Endothelial cell of umbilical vein (primary cell): ENCODE measurements at regions of chr4 and their contacts with region 1.

Region 1: DNA sequence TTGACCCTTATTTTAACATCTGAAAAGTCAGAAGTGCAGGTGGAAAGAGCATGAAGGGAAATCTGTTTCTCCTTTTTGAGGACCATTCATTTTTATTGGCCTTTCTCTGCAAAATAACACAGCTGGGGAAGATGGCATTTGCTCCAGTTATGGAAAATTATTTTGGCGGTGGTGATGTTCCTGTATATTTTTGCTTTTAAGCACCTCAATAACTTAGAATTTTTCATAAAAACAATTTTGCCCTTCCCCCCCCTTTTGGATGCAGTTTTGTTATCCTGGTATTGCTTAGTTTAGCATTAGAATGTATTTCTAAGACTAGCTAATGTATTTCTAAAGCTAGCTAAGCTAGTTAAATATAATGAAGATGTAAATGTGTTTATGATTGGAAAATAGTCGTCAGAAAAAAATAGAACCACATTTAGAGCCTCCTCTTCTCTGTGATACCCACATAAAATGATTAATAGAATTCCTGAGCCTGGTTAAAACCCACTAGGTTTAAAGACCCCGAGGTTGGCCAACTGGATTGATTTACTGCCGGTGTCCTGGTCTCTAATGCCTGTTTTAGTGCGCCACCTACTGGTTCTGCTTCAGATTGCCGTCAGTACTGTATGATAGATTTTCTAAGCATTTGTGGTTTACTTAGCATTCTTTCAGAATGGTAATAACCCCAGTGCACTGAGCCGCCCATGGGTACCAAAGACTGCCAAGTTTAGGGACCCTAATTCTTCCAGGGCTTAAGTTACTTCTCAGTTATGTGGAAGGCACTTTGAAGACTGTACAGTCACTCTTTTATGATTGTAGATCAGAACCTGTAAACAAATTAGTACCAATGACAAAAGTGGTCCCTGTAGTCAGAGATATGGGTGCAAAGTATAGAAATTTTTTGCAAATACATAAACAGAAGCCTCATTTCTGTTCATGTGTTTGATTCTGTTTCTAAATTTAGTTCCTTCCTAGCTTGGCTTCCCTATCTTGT is 11.4 kb downstream of the KLF3 start:
- DNase-seq: peak; percentile 86
- H3K4me3 ChIP-seq: no peak overlapping the region
- H3K27ac ChIP-seq: no peak overlapping the region
- H3K4me1 ChIP-seq: peaks cover 64% of the 10 kb centered on the region
- H3K27me3 ChIP-seq: no peaks in the 10 kb centered on the region
- CTCF ChIP-seq: peak; percentile 75 to 88
- POLR2A ChIP-seq: no peak

Region 2: DNA sequence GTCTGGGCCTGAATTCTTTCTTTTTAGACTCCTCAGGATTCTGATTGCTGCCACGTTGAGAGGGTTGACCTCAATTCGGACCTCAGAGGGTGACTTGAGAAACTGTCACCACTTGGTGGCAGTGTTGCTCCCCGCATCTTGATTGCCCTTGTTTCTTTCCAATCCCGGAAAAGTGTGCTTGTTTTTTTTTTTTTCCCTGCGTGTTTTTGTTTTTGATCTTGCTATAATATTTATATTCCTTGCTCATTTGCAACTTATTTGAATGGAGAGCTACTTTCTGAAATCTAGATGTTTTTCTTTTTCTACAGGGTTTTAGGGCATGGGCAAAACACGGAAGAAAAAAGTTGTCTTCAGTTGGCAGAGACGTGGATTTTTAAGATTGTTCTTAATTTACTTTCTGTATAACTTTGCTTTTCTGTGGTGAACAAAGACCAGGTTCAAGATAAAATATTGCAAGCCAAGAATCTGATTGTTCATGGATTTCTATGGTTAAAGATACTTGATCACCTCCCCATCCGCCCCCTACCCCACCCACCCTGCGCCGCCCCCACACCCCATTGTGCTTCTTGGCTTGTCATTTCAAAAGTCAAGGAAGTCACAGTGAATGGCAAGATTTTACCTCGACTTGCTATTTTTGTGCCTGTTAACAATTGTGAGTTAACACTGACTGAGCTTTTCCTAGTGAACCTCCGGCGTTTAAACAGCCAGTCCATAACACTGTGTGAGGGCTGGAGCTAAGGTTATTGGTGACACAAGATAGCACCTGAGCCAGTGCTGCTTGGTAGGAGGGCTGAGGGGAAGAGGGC is 613.1 kb before region 1 on chr4:
- CTCF ChIA-PET with region 1: interaction called, 6 read pairs
- POLR2A ChIA-PET with region 1: no interaction called
- dilution Hi-C with region 1: no loop called
- intact Hi-C with region 1: loop called (anchors 1 kb)
- DNase-seq: peak; percentile 82
- H3K4me3 ChIP-seq: peak overlapping the region in 2 of 3 experiments; percentile 8 to 64
- H3K27ac ChIP-seq: no peak overlapping the region
- H3K4me1 ChIP-seq: peaks cover 2% of the 10 kb centered on the region
- H3K27me3 ChIP-seq: no peaks in the 10 kb centered on the region
- CTCF ChIP-seq: peak; percentile 77 to 78
- POLR2A ChIP-seq: no peak

Region 3: DNA sequence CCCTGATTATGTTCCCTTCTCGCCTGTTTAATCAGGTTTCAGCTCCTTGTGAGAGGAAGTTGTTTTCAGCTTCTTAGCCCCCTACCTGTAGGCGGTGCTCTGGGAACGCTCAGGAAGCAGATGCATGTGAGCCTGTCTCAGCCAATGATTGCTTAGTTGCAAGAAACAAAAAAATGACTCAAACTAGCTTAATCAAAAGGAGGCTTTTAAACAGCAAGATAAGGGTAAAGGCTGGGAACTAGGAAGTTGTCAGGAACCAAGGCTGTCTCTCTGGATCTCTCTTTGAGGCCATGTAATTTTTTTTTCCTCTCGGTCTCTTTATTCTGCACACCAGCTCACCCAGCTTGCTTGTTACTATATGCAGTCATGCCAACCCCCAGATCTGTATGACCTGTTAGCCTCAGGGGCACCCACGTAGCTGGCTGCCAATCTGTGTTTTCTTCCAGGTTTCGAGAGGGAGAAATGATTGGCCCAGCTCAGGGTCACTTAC is 606.1 kb before region 1 on chr4:
- CTCF ChIA-PET with region 1: interaction called, 13 read pairs
- POLR2A ChIA-PET with region 1: no interaction called
- dilution Hi-C with region 1: no loop called
- intact Hi-C with region 1: no loop called
- DNase-seq: peak; percentile 38
- H3K4me3 ChIP-seq: no peak overlapping the region
- H3K27ac ChIP-seq: no peak overlapping the region
- H3K4me1 ChIP-seq: peaks cover 10% of the 10 kb centered on the region
- H3K27me3 ChIP-seq: no peaks in the 10 kb centered on the region
- CTCF ChIP-seq: no peak
- POLR2A ChIP-seq: no peak

Region 4: GRCh38 chr4:38174801-38175200 is 500.6 kb before region 1 on chr4:
- CTCF ChIA-PET with region 1: interaction called, 133 read pairs
- POLR2A ChIA-PET with region 1: no interaction called
- dilution Hi-C with region 1: loop called (anchors 25 kb)
- intact Hi-C with region 1: loop called (anchors 1 kb)
- DNase-seq: peak; percentile 16
- H3K4me3 ChIP-seq: no peak overlapping the region
- H3K27ac ChIP-seq: no peak overlapping the region
- H3K4me1 ChIP-seq: peaks cover 18% of the 10 kb centered on the region
- H3K27me3 ChIP-seq: peaks cover 2 to 7% of the 10 kb centered on the region in 2 experiments
- CTCF ChIP-seq: no peak
- POLR2A ChIP-seq: no peak

Region 5: DNA sequence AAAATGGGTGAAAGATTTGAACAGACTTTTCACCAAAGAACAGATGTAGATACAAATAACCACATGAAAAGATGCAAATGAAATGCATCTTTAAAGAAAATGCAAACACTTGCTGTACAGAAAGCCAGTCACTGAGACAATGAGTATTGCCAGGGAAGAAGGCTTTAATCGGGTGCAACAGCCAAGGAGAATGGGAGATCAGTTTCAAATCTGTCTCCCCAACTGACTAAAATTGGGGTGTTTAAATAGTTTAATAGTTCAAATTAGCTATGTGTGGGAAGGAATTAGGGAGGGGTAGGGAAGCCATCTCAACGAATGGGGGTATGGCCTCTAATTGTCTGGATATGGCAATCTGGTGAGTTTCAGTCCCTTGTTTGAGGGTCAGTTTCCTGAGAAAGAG is 419.9 kb before region 1 on chr4:
- CTCF ChIA-PET with region 1: no interaction called
- POLR2A ChIA-PET with region 1: no interaction called
- dilution Hi-C with region 1: no loop called
- intact Hi-C with region 1: no loop called
- DNase-seq: no peak
- H3K4me3 ChIP-seq: no peak overlapping the region
- H3K27ac ChIP-seq: no peak overlapping the region
- H3K4me1 ChIP-seq: no peaks in the 10 kb centered on the region
- H3K27me3 ChIP-seq: peaks cover 3% of the 10 kb centered on the region in 2 experiments
- CTCF ChIP-seq: no peak
- POLR2A ChIP-seq: no peak

Region 6: DNA sequence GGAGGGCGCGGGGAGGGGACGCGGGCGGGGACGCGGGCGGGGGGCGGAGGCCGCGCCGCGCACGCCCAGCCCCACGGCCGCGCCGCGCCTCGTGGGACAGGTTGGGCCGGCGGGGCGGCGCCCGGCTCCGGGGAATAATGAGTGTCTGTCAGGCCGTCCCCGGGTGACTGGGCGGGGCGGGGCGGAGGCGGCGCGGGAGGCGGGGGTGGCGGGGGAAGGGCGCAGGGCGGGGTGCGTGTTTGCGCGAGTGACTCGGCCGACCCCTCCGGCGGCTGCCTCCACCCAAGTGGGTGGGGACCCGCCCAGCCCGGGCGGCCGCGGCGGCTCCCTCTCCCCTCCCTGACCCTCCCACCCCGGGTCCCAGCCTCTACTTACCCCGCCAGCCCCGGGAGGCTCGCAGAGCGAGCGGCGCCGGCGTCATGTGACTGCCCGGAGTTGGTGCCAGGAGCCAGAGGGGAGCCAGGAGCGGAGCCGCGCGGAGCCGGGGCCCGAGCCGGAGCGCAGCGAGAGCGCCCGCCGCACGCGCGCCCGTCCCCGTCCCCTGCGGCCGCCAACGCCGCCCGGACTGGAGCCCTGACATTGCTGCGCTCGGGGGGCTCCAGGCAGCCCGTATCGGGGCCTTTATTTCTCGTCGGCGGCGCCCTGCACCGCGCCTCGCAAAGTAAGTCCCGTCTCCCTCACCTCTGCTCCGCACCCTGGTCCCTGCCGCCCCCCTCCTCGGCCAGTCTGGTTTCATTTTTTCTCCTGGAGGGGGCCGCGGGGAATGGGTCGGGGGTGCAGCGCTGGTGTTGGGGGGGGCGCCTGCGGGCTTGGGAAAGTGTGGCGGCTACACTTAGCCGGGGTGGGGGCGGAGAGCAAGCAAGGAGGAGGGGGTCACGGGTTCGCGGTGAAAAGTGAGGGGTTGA is 11.4 kb before region 1 on chr4 and contains the start of gene KLF3:
- CTCF ChIA-PET with region 1: interaction called, 16 read pairs
- POLR2A ChIA-PET with region 1: interaction called, 6 read pairs
- dilution Hi-C with region 1: no loop called
- intact Hi-C with region 1: loop called (anchors 1 kb)
- DNase-seq: peak; percentile 86
- H3K4me3 ChIP-seq: peak within 1 kb of the TSS; percentile 81 to 89 (median 88)
- H3K27ac ChIP-seq: peak within 1 kb of the TSS; percentile 99
- H3K4me1 ChIP-seq: peaks cover 28% of the 10 kb centered on the region
- H3K27me3 ChIP-seq: no peaks in the 10 kb centered on the region
- CTCF ChIP-seq: no peak
- POLR2A ChIP-seq: peak; percentile 56
- total RNA-seq, gene KLF3: 50.5 and 51.8 TPM in 2 replicates

Region 7: DNA sequence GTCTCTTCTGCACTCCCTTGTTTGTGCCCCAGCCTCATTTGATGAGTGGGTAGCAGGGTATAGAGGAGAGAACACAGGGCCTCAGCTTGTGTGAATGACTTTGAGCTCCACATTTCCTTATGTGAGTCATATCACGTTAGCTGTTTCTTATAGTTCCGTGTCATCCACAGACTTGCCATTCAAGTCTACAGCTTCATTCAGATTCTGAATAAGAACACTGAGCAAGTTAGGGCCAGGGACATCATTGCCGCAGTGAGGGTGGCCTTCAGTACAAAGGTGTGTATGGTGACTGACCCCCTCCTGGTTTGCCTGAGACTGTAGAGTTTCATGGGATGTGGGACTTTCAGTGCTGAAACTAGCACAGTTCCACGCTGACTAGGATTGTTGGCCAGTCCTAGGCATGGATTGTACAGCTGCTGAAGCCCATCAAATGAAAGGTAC is 12.2 kb after region 1 on chr4:
- CTCF ChIA-PET with region 1: interaction called, 40 read pairs
- POLR2A ChIA-PET with region 1: no interaction called
- dilution Hi-C with region 1: no loop called
- intact Hi-C with region 1: no loop called
- DNase-seq: peak; percentile 56
- H3K4me3 ChIP-seq: no peak overlapping the region
- H3K27ac ChIP-seq: peak overlapping the region; percentile 16
- H3K4me1 ChIP-seq: peaks cover 32% of the 10 kb centered on the region
- H3K27me3 ChIP-seq: no peaks in the 10 kb centered on the region
- CTCF ChIP-seq: no peak
- POLR2A ChIP-seq: no peak

Region 8: GRCh38 chr4:38730830-38731646 is 55.6 kb after region 1 on chr4:
- CTCF ChIA-PET with region 1: interaction called, 6 read pairs
- POLR2A ChIA-PET with region 1: no interaction called
- dilution Hi-C with region 1: no loop called
- intact Hi-C with region 1: loop called (anchors 1 kb)
- DNase-seq: peak; percentile 73
- H3K4me3 ChIP-seq: no peak overlapping the region
- H3K27ac ChIP-seq: no peak overlapping the region
- H3K4me1 ChIP-seq: no peaks in the 10 kb centered on the region
- H3K27me3 ChIP-seq: peaks cover 0 to 4% of the 10 kb centered on the region in 2 experiments
- CTCF ChIP-seq: peak; percentile 93 to 96
- POLR2A ChIP-seq: no peak